GM12878 (cell line): ENCODE measurements at regions of chr16 and their contacts with region 1.

Region 1: DNA sequence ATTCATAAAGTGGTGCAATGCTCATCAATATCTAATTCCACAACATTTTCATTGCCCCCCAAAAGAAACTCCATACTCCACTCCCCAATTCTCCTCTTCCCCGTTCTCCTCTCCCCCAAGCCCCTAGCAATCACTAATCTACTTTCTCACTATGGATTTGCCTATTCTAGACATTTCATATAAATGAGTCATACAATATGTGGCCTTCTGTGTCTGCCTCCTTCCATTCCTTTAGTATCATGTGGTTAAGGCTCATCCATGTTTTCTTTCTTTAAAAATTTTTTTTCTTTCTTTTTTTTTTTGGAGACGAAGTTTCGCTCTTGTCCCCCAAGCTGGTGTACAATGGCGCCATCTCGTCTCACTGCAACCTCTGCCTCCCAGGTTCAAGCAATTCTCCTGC is 56.3 kb upstream of the HAS3 start:
- DNase-seq: no peak
- ATAC-seq: no peak
- H3K4me3 ChIP-seq: no peak overlapping the region
- H3K27ac ChIP-seq: no peak overlapping the region
- H3K4me1 ChIP-seq: no peaks in the 10 kb centered on the region
- H3K27me3 ChIP-seq: no peaks in the 10 kb centered on the region
- CTCF ChIP-seq: no peak
- EP300 ChIP-seq: no peak
- POLR2A ChIP-seq: no peak
- RAD21 ChIP-seq: no peak

Region 2: DNA sequence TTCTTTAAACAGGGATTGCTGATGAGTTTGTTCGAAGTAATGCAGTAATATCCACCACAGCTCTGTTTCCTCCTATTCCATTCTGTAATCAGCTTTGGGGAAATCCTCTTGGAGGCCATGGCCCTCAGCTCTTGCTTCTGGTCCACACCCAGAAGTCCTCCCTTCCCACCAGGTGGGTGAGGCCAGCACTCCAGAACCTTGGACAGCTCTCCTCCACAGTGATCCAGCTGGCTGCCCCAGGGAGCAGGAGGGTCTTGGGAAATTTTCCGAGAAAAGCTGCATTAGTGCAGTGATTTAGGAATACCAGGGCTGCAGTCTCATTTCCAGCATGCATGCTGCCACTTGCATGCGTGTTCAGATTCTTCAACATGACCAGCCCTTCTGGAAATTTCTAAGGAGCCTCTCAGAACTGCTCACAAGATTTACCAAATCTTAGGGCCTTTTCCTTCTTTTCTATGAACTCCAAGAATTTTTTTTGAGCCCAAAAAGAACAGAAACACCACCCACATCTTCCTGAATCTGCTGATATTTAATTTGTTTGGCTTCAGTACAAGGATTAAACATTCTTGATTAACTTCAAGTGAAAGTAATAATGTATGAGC is 605.0 kb before region 1 on chr16:
- CTCF ChIA-PET with region 1: no interaction called
- POLR2A ChIA-PET with region 1: no interaction called
- RAD21 ChIA-PET with region 1: no interaction called
- SMC1A ChIA-PET with region 1: no interaction called
- in situ Hi-C with region 1: no loop called
- intact Hi-C with region 1: no loop called
- DNase-seq: no peak
- ATAC-seq: no peak
- H3K4me3 ChIP-seq: no peak overlapping the region
- H3K27ac ChIP-seq: no peak overlapping the region
- H3K4me1 ChIP-seq: no peaks in the 10 kb centered on the region
- H3K27me3 ChIP-seq: 0 out of 4 replicates have a peak, but pooled peaks cover 0 to 2% of the 10 kb centered on the region in 2 experiments
- CTCF ChIP-seq: no peak
- EP300 ChIP-seq: no peak
- POLR2A ChIP-seq: no peak
- RAD21 ChIP-seq: no peak

Region 3: DNA sequence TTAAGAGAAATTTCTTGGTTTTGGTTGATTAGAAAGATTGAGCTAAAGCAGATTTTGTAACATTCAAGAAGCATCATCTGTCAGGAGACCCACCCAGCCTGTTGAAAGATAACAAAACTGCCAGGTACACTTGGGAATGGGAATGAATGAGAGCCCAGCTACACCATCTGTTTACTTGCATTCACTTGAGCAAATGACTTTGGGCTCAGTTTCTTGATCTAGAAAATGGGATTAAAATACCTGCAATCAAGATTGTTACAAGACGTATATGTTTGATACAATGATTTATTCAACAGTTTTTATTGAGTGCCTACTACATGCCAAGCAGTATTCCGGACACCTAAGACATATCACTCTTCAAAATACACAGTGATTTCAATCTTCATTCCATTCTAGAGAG is 20.0 kb before region 1 on chr16:
- CTCF ChIA-PET with region 1: no interaction called
- POLR2A ChIA-PET with region 1: no interaction called
- RAD21 ChIA-PET with region 1: no interaction called
- SMC1A ChIA-PET with region 1: no interaction called
- in situ Hi-C with region 1: no loop called
- intact Hi-C with region 1: loop called (anchors 2 kb)
- DNase-seq: no peak
- ATAC-seq: no peak
- H3K4me3 ChIP-seq: no peak overlapping the region
- H3K27ac ChIP-seq: no peak overlapping the region
- H3K4me1 ChIP-seq: no peaks in the 10 kb centered on the region
- H3K27me3 ChIP-seq: no peaks in the 10 kb centered on the region
- CTCF ChIP-seq: no peak
- EP300 ChIP-seq: no peak
- POLR2A ChIP-seq: no peak
- RAD21 ChIP-seq: no peak

Region 4: DNA sequence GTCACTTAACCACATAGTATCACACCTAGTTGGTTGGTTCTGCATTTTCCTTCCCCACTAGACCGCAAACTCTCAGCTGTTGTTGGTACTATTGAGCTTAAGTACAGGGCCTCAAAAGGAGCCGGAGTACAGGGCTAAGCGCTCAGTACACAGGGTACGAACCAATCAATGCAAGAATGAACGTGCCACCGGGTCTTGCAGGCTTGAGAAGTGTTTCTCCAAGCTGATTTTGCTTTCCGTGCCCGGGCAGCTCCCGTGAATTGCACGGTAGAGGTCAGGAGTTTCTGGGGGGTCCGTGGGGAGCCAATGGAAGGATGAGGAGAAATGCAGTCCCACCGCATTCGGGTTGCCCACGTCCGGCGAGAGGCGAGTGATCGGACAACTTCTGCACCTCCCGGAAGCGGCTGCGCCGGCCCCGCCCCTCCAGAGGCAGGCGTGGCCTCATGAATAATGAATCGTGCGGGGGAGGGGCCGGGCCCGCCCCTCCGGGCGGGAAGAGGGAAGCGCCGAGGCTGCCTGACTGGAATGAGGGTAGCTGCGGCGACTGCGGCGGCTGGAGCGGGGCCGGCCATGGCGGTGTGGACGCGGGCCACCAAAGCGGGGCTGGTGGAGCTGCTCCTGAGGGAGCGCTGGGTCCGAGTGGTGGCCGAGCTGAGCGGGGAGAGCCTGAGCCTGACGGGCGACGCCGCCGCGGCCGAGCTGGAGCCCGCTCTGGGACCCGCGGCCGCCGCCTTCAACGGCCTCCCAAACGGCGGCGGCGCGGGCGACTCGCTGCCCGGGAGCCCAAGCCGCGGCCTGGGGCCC is 137.7 kb after region 1 on chr16 and contains the start of gene SNTB2:
- CTCF ChIA-PET with region 1: no interaction called
- POLR2A ChIA-PET with region 1: no interaction called
- RAD21 ChIA-PET with region 1: no interaction called
- SMC1A ChIA-PET with region 1: no interaction called
- in situ Hi-C with region 1: no loop called
- intact Hi-C with region 1: no loop called
- DNase-seq: peak; percentile 95
- ATAC-seq: peak; percentile 92
- H3K4me3 ChIP-seq: peak within 1 kb of the TSS; percentile 88
- H3K27ac ChIP-seq: peak within 1 kb of the TSS; percentile 90
- H3K4me1 ChIP-seq: peaks cover 22% of the 10 kb centered on the region
- H3K27me3 ChIP-seq: no peaks in the 10 kb centered on the region
- CTCF ChIP-seq: no peak
- EP300 ChIP-seq: peak; percentile 89 to 96
- POLR2A ChIP-seq: peak; percentile 77
- RAD21 ChIP-seq: no peak
- polyA plus RNA-seq, gene SNTB2: 1.2 to 1.4 TPM